ENCODE measurements at regions of chr4 and their contacts with region 1.

Region 1: GRCh38 chr4:165131247-165131832 is 18.7 kb upstream of the TMEM192 start:
- DNase-seq: no peak
- H3K4me3 ChIP-seq: no peak overlapping the region
- H3K27ac ChIP-seq: no peak overlapping the region
- H3K4me1 ChIP-seq: peaks cover 0 to 44% (median 17%) of the 10 kb centered on the region in 6 donors
- H3K27me3 ChIP-seq: peaks cover 0 to 12% (median 0%) of the 10 kb centered on the region in 7 donors
- CTCF ChIP-seq: peak; percentile 87 to 96 (median 91)
- POLR2A ChIP-seq: no peak

Region 2: DNA sequence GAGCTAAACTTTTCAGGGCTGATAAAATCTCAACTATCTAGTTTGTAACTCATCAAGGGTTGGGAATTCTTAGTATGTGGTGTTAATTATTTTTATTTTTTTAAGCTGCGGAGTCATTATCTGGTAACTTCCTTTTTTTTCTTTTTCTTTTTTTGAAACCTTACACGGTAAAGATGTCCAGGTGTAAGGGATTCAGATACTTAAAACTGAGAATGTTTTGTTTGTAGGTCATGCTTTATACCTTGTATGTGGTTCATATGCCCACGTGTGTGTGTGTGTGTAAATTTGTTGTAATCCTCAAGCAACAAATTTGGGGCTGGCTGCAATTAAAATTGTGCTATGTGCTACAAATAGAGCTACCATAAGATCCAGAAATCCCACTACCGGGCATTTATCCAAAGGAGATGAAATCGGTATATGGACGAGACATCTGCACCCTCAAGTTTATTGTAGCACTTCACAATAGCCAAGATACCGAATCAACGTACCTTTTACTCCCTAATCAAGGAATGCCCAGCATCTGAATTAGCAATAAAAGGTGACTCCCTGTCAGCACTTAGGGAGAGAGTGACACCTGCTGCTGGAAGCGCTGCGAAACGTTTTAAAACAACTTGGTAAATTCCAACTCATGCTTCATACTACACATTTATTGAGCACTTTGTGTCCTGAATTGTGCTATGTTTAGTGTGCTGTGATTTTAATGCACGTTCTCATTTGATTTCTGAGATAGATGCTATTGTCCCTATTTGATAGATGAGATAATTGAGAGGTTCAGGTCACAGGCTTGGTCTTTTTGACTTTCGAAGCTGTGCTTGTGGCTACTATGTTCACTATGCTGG is 212.2 kb after region 1 on chr4:
- intact Hi-C with region 1: loop called (anchors 10 kb)
- DNase-seq: no peak
- H3K4me3 ChIP-seq: no peak overlapping the region
- H3K27ac ChIP-seq: no peak overlapping the region
- H3K4me1 ChIP-seq: no peaks in the 10 kb centered on the region
- H3K27me3 ChIP-seq: no peaks in the 10 kb centered on the region
- CTCF ChIP-seq: peak in 1 of 11 experiments; percentile 10
- POLR2A ChIP-seq: no peak

Region 3: GRCh38 chr4:165464813-165465381 is 333.6 kb after region 1 on chr4:
- intact Hi-C with region 1: loop called (anchors 2 kb)
- DNase-seq: no peak
- H3K4me3 ChIP-seq: no peak overlapping the region
- H3K27ac ChIP-seq: no peak overlapping the region
- H3K4me1 ChIP-seq: peaks cover 0 to 6% (median 0%) of the 10 kb centered on the region in 6 donors
- H3K27me3 ChIP-seq: peaks cover 0 to 5% (median 0%) of the 10 kb centered on the region in 7 donors
- CTCF ChIP-seq: peak in 10 of 11 experiments; percentile 47 to 80 (median 67)
- POLR2A ChIP-seq: no peak

Measured in spleen (tissue), 13 donors.